ENCODE measurements at regions of chr3 and their contacts with region 1.

Region 1: DNA sequence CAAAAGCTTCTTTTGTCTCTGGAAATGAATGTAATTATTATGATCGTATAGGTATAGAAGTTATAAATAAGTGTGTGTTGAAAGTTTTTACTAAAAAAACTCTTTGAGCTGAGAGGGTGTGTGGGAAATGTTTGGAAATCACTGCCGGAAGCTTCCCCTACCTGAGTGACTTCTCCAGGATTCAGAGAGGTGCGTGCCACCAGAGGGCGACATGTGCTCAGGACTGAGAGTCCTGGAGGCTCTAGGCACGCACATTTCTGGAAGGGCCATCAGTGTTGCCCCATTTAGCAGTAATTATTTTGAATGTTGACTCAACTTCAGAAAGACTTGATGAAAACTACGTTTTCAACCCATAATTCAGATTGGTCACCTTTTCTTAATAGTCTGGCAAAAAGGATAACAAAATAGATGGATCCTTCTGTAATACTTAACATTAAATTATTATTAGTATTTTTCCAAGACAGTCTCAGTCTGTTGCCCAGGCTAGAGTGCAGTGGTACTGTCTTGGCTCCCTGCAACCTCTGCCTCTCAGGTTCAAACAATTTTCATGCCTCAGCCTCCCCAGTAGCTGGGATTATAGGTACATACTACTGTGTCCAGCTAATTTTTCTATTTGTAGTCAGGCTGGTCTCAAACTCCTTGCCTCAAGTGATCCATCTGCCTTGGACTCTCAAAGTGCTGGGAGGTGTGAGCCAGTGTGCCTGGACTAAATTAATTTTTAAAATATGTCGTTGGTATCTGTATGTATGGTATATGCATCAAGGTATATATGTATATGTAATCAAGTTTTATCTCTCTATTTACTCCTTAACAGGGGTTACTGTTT is 34.5 kb downstream of the GPR171 start:
- DNase-seq: peak; percentile 41 to 88 (median 75)
- ATAC-seq: peak; percentile 63 to 70 (median 68)
- H3K4me3 ChIP-seq: no peak overlapping the region
- H3K4me3 Mint-ChIP-seq: no peak overlapping the region
- H3K27ac ChIP-seq: no peak overlapping the region
- H3K27ac Mint-ChIP-seq: no peak overlapping the region
- H3K4me1 ChIP-seq: peaks cover 33% of the 10 kb centered on the region in 2 experiments
- H3K4me1 Mint-ChIP-seq: peaks cover 40 to 42% (median 40%) of the 10 kb centered on the region in 3 donors
- H3K27me3 ChIP-seq: no peaks in the 10 kb centered on the region
- H3K27me3 Mint-ChIP-seq: no peaks in the 10 kb centered on the region

Region 2: GRCh38 chr3:151086484-151087456 is 81.7 kb before region 1 on chr3:
- CTCF ChIA-PET with region 1: no interaction called
- POLR2A ChIA-PET with region 1: no interaction called
- DNase-seq: peak; percentile 25 to 76 (median 56)
- ATAC-seq: peak; percentile 78 to 93 (median 82)
- H3K4me3 ChIP-seq: peak overlapping the region; percentile 46 to 82
- H3K4me3 Mint-ChIP-seq: peak overlapping the region; percentile 81 to 84 (median 82)
- H3K27ac ChIP-seq: no peak overlapping the region
- H3K27ac Mint-ChIP-seq: peak overlapping the region in 1 of 2 donors; percentile 7
- H3K4me1 ChIP-seq: peaks cover 0 to 20% of the 10 kb centered on the region in 2 experiments
- H3K4me1 Mint-ChIP-seq: peaks cover 0 to 15% (median 13%) of the 10 kb centered on the region in 3 donors
- H3K27me3 ChIP-seq: peaks cover 2 to 26% of the 10 kb centered on the region in 2 experiments
- H3K27me3 Mint-ChIP-seq: peaks cover 18 to 43% of the 10 kb centered on the region in 2 donors

Region 3: DNA sequence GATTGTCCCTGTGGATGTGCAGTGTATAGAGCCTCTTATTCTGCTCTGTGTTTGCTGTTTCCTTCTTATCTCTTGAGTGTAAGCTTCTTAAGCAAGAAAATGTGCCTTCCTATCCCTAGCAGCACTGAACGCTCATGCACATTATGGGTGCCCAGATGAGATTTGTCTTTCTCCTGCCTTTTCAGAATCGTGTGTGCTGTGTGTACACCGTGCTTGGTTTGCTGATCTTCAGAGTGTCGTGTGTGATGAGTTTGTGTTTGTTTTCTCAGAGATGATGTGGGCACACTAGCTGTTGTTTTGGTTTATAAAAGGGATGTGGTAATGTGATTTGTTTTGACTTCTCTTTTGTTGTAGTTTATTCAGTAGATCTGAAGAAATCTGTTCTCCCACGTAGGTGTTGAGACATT is 14.8 kb after region 1 on chr3:
- CTCF ChIA-PET with region 1: interaction called, 12 to 13 read pairs
- POLR2A ChIA-PET with region 1: no interaction called
- DNase-seq: peak in 10 of 35 experiments; percentile 5 to 50 (median 16)
- ATAC-seq: peak; percentile 71 to 88 (median 86)
- H3K4me3 ChIP-seq: no peak overlapping the region
- H3K4me3 Mint-ChIP-seq: peak overlapping the region; percentile 58 to 68 (median 62)
- H3K27ac ChIP-seq: peak overlapping the region; percentile 33
- H3K27ac Mint-ChIP-seq: peak overlapping the region; percentile 85 to 91
- H3K4me1 ChIP-seq: peaks cover 5 to 12% of the 10 kb centered on the region in 2 experiments
- H3K4me1 Mint-ChIP-seq: peaks cover 31 to 44% (median 33%) of the 10 kb centered on the region in 3 donors
- H3K27me3 ChIP-seq: no peaks in the 10 kb centered on the region
- H3K27me3 Mint-ChIP-seq: no peaks in the 10 kb centered on the region

Region 4: DNA sequence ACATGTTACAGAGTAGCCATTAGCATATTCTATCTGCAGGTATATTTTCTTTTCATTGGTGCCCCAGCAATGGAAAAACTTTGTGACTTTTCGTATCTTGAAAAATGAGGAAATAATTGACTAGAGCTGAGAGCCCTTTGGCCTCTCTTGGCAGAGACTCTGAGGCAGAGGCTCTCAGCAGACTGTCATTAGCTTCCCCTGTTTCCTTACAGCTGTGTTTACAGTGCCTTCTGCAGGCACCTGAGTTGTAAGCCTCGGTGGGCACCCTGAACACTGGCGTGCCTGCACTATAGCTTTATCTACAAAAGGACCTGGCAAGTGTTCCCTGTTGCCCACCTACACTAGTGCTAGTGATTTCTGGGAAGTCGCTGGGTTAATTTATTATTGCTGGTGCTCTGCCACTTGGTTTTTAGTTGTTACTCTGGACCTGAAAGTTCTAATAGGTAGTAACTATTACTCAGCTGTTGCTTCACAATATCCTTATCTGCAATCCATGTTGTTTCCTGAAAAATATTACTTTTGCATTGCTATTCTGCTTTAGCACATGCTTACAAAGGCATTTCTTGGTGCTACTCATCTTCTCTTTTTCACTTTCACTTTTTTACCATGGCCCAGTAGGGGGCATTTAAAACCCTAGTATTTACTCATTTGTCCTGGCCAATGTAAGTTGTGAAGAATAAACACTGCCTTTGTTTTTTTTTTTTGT is 42.3 kb after region 1 on chr3:
- CTCF ChIA-PET with region 1: interaction called, 7 to 11 read pairs
- POLR2A ChIA-PET with region 1: interaction called in 1 of 2 experiments, 3 read pairs
- DNase-seq: peak in 1 of 35 experiments; percentile 23
- ATAC-seq: peak; percentile 63 to 73 (median 65)
- H3K4me3 ChIP-seq: no peak overlapping the region
- H3K4me3 Mint-ChIP-seq: peak overlapping the region in 1 of 3 donors; percentile 40
- H3K27ac ChIP-seq: no peak overlapping the region
- H3K27ac Mint-ChIP-seq: peak overlapping the region; percentile 83 to 84
- H3K4me1 ChIP-seq: peaks cover 19 to 41% of the 10 kb centered on the region in 2 experiments
- H3K4me1 Mint-ChIP-seq: peaks cover 49 to 52% (median 50%) of the 10 kb centered on the region in 3 donors
- H3K27me3 ChIP-seq: no peaks in the 10 kb centered on the region
- H3K27me3 Mint-ChIP-seq: no peaks in the 10 kb centered on the region

Region 5: GRCh38 chr3:151268267-151269235 is 100.1 kb after region 1 on chr3:
- CTCF ChIA-PET with region 1: interaction called, 3 to 10 read pairs
- POLR2A ChIA-PET with region 1: no interaction called
- DNase-seq: peak in 18 of 35 experiments; percentile 2 to 54 (median 14)
- ATAC-seq: peak; percentile 50 to 81 (median 70)
- H3K4me3 ChIP-seq: no peak overlapping the region
- H3K4me3 Mint-ChIP-seq: peak overlapping the region; percentile 49 to 61 (median 59)
- H3K27ac ChIP-seq: peak overlapping the region; percentile 42
- H3K27ac Mint-ChIP-seq: peak overlapping the region; percentile 87 to 91
- H3K4me1 ChIP-seq: peaks cover 4 to 7% of the 10 kb centered on the region in 2 experiments
- H3K4me1 Mint-ChIP-seq: peaks cover 13 to 30% (median 19%) of the 10 kb centered on the region in 3 donors
- H3K27me3 ChIP-seq: no peaks in the 10 kb centered on the region
- H3K27me3 Mint-ChIP-seq: peaks cover 0 to 3% of the 10 kb centered on the region in 2 donors

Region 6: DNA sequence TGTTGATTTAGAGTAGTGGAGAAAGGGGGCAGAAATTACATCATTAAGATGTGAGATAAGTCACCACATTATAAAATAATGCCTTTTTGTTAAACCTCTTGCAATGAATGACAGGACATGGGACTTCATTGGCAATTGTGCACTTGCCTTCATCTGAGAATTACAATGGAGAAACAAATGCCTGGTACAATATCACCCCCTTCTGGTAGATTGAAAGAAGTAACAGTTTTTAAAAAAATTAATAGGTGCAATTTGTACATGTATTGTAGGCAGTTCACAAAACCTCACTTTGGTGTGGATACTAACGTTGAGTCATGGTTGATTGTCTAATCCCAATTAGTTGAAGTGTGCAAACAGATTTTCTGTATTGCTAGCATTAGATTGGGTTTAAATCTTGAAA is 114.4 kb after region 1 on chr3:
- CTCF ChIA-PET with region 1: interaction called, 26 to 37 read pairs
- POLR2A ChIA-PET with region 1: interaction called in 1 of 2 experiments, 9 read pairs
- DNase-seq: peak in 2 of 35 experiments; percentile 13 to 80
- ATAC-seq: peak; percentile 49 to 69 (median 66)
- H3K4me3 ChIP-seq: no peak overlapping the region
- H3K4me3 Mint-ChIP-seq: no peak overlapping the region
- H3K27ac ChIP-seq: no peak overlapping the region
- H3K27ac Mint-ChIP-seq: peak overlapping the region in 1 of 2 donors; percentile 66
- H3K4me1 ChIP-seq: peaks cover 0 to 30% of the 10 kb centered on the region in 2 experiments
- H3K4me1 Mint-ChIP-seq: peaks cover 13 to 34% (median 32%) of the 10 kb centered on the region in 3 donors
- H3K27me3 ChIP-seq: no peaks in the 10 kb centered on the region
- H3K27me3 Mint-ChIP-seq: no peaks in the 10 kb centered on the region

Measured in T-cell (primary cell).